ENCODE measurements at regions of chr12 and their contacts with region 1.

Region 1: GRCh38 chr12:99043319-99043914 is 398.3 kb downstream of the APAF1 start:
- DNase-seq: peak in 5 of 9 donors; percentile 1 to 37 (median 16)
- ATAC-seq: peak; percentile 51
- H3K4me3 ChIP-seq: no peak overlapping the region
- H3K4me3 Mint-ChIP-seq: no peak overlapping the region
- H3K27ac ChIP-seq: no peak overlapping the region
- H3K27ac Mint-ChIP-seq: no peak overlapping the region
- H3K4me1 ChIP-seq: no peaks in the 10 kb centered on the region
- H3K4me1 Mint-ChIP-seq: no peaks in the 10 kb centered on the region
- H3K27me3 ChIP-seq: no peaks in the 10 kb centered on the region
- H3K27me3 Mint-ChIP-seq: peaks cover 0 to 21% (median 6%) of the 10 kb centered on the region in 5 donors

Region 2: GRCh38 chr12:99619389-99620158 is 576.2 kb after region 1 on chr12:
- CTCF ChIA-PET with region 1: no interaction called
- POLR2A ChIA-PET with region 1: no interaction called
- intact Hi-C with region 1: loop called in 1 of 2 experiments (anchors 1 kb)
- DNase-seq: no peak
- ATAC-seq: no peak
- H3K4me3 ChIP-seq: no peak overlapping the region
- H3K4me3 Mint-ChIP-seq: no peak overlapping the region
- H3K27ac ChIP-seq: no peak overlapping the region
- H3K27ac Mint-ChIP-seq: no peak overlapping the region
- H3K4me1 ChIP-seq: no peaks in the 10 kb centered on the region
- H3K4me1 Mint-ChIP-seq: no peaks in the 10 kb centered on the region
- H3K27me3 ChIP-seq: no peaks in the 10 kb centered on the region
- H3K27me3 Mint-ChIP-seq: no peaks in the 10 kb centered on the region

Region 3: DNA sequence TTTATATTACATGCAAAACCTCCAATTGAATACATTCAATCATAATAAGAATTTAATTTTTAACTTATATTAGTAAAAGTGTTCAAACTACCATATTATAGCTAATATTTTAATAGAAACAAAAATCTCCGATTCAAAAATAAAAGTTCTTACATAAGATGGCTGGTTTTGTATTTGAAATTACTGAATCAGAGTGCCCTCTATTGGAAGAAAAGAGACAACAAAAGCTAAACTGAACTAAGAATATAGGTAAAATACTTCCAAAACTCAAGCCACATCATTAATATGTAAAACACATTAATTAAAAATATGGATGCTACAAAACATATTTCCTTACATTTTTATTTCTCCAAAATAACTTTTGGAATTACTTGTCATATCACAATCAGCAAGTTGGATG is 724.4 kb after region 1 on chr12:
- CTCF ChIA-PET with region 1: no interaction called
- POLR2A ChIA-PET with region 1: no interaction called
- intact Hi-C with region 1: loop called in 1 of 2 experiments (anchors 1 kb)
- DNase-seq: no peak
- ATAC-seq: no peak
- H3K4me3 ChIP-seq: no peak overlapping the region
- H3K4me3 Mint-ChIP-seq: no peak overlapping the region
- H3K27ac ChIP-seq: no peak overlapping the region
- H3K27ac Mint-ChIP-seq: no peak overlapping the region
- H3K4me1 ChIP-seq: no peaks in the 10 kb centered on the region
- H3K4me1 Mint-ChIP-seq: no peaks in the 10 kb centered on the region
- H3K27me3 ChIP-seq: no peaks in the 10 kb centered on the region
- H3K27me3 Mint-ChIP-seq: peaks cover 0 to 2% (median 0%) of the 10 kb centered on the region in 5 donors

Measured in naive thymus-derived CD4-positive, alpha-beta T cell (primary cell).